ENCODE measurements at regions of chr10 and their contacts with region 1.

Region 1: DNA sequence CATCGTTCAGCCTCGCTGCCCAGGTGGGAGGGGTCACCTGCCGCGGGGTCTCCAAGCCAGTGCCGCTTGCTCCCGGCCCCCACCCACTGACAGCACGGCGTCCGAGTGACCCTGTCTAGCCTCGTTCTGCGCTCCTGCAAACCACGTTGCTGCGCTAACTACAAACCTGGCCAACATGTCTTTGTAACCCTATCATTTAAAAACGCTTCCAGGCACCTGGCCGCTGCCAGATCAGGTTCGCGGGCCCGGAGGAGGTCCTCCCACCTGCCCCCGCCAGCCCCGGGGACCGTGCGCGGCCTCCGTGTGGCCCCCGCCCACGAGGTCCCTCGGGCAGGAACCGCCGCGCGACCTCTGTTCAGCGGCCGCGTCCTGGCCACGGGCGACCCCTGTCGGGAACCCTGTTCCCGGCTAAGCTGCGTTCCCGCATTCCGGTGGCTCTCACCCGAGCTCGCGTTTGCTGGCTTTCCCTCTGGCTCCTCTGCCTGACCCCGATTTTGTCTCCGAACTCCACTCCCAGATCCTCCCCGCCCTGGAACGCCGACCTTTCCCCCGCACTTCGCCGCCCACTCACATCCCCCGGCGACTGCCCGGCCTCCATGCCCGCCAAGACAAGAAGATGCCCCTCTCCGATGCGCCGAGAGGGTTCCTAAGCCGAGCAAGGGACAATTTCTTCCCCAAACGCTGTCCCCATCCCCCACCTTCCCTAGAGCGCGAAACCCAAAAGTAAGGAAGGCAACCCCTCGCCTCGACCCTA is 2.4 kb downstream of the SFMBT2 start:
- DNase-seq: peak; percentile 65 to 82 (median 77)
- H3K4me3 ChIP-seq: peak overlapping the region; percentile 57
- H3K27ac ChIP-seq: peak overlapping the region; percentile 83 to 90
- H3K4me1 ChIP-seq: peaks cover 20% of the 10 kb centered on the region
- H3K27me3 ChIP-seq: no peaks in the 10 kb centered on the region
- CTCF ChIP-seq: peak; percentile 31 to 59 (median 37)
- EP300 ChIP-seq: no peak
- POLR2A ChIP-seq: no peak

Region 2: GRCh38 chr10:6918305-6918704 is 490.2 kb before region 1 on chr10:
- intact Hi-C with region 1: loop called in 1 of 4 experiments (anchors 10 kb)
- DNase-seq: peak in 1 of 5 donors; percentile 37
- H3K4me3 ChIP-seq: no peak overlapping the region
- H3K27ac ChIP-seq: no peak overlapping the region
- H3K4me1 ChIP-seq: peaks cover 3% of the 10 kb centered on the region
- H3K27me3 ChIP-seq: no peaks in the 10 kb centered on the region
- CTCF ChIP-seq: no peak
- EP300 ChIP-seq: no peak
- POLR2A ChIP-seq: no peak

Region 3: GRCh38 chr10:7260412-7260900 is 148.0 kb before region 1 on chr10:
- intact Hi-C with region 1: loop called in 3 of 4 experiments (anchors 5 to 10 kb)
- DNase-seq: peak in 4 of 5 donors; percentile 35 to 73 (median 61)
- H3K4me3 ChIP-seq: no peak overlapping the region
- H3K27ac ChIP-seq: no peak overlapping the region
- H3K4me1 ChIP-seq: peaks cover 5% of the 10 kb centered on the region
- H3K27me3 ChIP-seq: no peaks in the 10 kb centered on the region
- CTCF ChIP-seq: peak; percentile 19 to 70 (median 66)
- EP300 ChIP-seq: no peak
- POLR2A ChIP-seq: no peak

Region 4: DNA sequence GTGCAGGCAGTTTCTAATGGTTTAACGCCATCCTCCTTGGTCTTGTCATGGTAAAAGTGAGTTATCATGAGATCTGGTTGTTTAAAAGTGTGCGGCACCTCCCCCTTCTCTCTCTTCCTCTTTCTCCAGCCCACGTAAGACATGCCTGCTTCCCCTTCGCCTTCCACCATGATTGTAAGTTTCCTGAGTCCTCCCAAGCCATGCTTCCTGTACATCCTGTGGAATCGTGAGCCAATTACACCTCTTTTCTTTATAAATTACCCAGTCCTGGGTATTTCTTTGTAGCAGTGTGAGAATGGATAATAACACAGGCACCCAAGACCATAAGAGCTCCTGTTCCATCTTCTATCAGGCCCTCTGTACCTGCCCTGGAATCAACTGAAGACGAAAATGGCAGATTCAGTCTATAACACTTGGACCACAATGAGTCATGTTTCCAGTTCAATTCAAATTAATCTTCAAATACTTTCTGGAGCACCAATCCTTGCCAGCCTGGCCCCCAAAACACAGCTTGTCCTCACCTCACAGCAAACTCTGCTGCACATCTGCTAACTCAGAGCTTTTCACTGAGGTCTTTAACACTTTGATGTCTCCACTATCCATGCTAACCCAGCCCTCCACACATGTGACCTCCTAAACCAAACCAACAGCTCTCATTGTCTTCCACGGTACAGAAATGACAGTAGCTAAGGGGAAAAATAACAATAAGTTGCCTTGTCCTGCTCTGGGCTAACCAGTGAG is 70.9 kb before region 1 on chr10:
- intact Hi-C with region 1: loop called in 1 of 4 experiments (anchors 10 kb)
- DNase-seq: no peak
- H3K4me3 ChIP-seq: no peak overlapping the region
- H3K27ac ChIP-seq: no peak overlapping the region
- H3K4me1 ChIP-seq: peaks cover 7% of the 10 kb centered on the region
- H3K27me3 ChIP-seq: no peaks in the 10 kb centered on the region
- CTCF ChIP-seq: no peak
- EP300 ChIP-seq: no peak
- POLR2A ChIP-seq: no peak